Astrocyte of the cerebellum (primary cell): ENCODE measurements at regions of chr11 and their contacts with region 1.

Region 1: GRCh38 chr11:70504246-70505020 is 106.1 kb downstream of the CTTN start:
- DNase-seq: no peak
- H3K4me3 ChIP-seq: no peak overlapping the region
- CTCF ChIP-seq: no peak

Region 2: GRCh38 chr11:70448983-70449567 is 55.4 kb before region 1 on chr11:
- in situ Hi-C with region 1: no loop called
- DNase-seq: no peak
- H3K4me3 ChIP-seq: no peak overlapping the region
- CTCF ChIP-seq: peak; percentile 47

Region 3: DNA sequence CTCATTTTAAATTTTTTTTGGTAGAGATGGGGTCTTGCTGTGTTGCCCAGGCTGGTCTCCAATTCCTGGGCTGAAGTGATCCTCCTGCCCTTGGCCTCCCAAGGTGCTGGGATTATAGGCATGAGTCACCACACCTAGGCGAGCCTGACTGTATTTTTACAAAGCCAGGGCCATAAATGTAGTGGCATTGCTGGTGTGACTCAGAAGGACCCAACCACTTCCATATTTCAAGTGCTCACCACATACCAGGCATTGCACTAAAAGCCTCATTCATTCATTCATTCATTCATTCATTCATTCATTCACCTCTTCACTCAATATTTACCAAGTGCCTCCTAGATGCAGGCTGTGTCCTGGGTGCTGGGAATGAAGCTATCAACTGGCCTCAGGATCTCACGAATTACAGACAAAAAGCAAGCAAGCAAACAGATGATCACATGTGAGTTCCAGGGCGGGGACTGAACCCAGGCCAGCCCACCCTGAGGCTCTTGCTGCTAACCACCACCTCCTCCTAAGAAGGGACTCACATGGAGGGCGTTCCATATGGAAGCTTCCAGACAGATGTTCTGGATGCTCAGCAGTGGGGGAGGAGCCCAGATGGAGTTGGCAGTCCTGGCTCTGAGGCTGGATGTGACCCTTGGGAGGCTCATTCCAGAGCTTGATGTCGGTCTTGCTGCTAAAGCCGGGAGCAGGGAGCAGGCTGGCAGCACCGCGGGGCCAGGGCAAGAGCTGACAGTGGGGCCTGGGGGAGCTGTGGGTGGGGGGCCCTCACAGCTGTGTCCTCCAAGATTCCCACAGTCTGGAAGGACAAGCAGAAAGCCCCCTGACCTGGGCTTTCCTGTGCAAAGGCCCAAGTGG is 52.7 kb after region 1 on chr11:
- in situ Hi-C with region 1: loop called (anchors 5 kb)
- DNase-seq: no peak
- H3K4me3 ChIP-seq: no peak overlapping the region
- CTCF ChIP-seq: no peak